ENCODE measurements at regions of chr2 and their contacts with region 1.

Region 1: DNA sequence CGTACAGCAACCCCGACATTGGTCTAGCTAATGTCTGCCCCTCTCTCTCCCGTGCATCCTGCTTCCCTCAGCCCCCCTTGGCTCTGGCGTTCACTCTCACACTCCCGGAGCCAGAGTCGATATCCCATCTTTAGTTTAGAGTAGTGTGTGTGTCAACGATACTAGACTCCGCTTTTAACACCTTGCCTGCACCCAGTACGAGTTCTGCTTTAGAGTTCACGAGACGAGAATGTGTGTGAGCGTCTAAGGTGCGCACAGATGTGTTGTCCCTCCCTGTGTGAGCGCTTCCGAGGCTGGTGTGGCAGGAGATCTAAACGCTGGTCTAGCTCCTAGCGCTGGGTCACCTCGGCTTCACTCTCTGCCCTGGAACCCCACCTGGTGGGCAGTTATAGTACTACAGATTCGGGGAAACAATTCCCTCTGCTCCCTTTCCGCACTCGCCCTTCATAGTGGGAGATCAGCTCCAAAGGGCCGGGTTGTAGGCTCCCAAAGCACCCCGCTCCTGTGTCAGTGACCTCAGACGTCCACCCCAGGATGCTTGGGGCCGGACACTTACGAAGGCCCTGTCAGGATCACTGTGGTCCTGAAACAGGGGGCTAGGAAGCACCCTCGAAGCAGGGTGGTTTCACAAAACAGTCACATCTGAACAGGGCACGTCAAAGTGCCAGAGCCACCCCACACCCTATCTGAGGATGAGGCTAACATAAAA is 2.6 kb upstream of the CYP26B1 start:
- DNase-seq: peak; percentile 86
- H3K4me3 ChIP-seq: peak overlapping the region; percentile 60
- H3K27ac ChIP-seq: no peak overlapping the region
- H3K4me1 ChIP-seq: peaks cover 23% of the 10 kb centered on the region
- H3K27me3 ChIP-seq: peaks cover 35% of the 10 kb centered on the region
- CTCF ChIP-seq: peak; percentile 78

Region 2: GRCh38 chr2:71545572-71546274 is 604.6 kb before region 1 on chr2:
- CTCF ChIA-PET with region 1: interaction called, 6 read pairs
- POLR2A ChIA-PET with region 1: no interaction called
- intact Hi-C with region 1: loop called (anchors 2 kb)
- DNase-seq: peak; percentile 80
- H3K4me3 ChIP-seq: peak overlapping the region; percentile 25
- H3K27ac ChIP-seq: no peak overlapping the region
- H3K4me1 ChIP-seq: peaks cover 4% of the 10 kb centered on the region
- H3K27me3 ChIP-seq: no peaks in the 10 kb centered on the region
- CTCF ChIP-seq: peak; percentile 84

Region 3: DNA sequence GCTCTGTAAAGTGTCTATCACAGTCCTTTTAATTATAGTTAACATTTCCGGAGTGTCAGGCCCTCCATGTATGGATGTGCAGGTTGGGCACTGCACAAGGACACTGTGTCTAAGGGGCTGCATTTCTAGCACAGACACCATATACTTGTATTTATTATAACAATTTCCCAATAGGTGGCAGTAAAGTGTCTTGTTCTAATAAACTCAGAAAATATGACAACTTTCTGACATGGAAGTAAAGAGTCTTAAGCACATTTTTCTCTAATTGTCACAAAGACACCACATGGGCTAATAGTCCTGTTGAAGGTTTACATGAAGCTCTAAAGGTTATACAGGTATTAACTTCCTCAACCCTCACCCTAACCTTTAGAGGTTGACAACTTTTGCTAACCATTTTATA is 540.4 kb before region 1 on chr2:
- CTCF ChIA-PET with region 1: interaction called, 3 read pairs
- POLR2A ChIA-PET with region 1: no interaction called
- intact Hi-C with region 1: loop called (anchors 10 kb)
- DNase-seq: peak; percentile 68
- H3K4me3 ChIP-seq: no peak overlapping the region
- H3K27ac ChIP-seq: no peak overlapping the region
- H3K4me1 ChIP-seq: peaks cover 5% of the 10 kb centered on the region
- H3K27me3 ChIP-seq: no peaks in the 10 kb centered on the region
- CTCF ChIP-seq: peak; percentile 45; the same call in 1 of the 2 replicates

Region 4: GRCh38 chr2:71798266-71799012 is 351.9 kb before region 1 on chr2:
- CTCF ChIA-PET with region 1: no interaction called
- POLR2A ChIA-PET with region 1: no interaction called
- intact Hi-C with region 1: loop called (anchors 5 kb)
- DNase-seq: peak; percentile 34
- H3K4me3 ChIP-seq: no peak overlapping the region
- H3K27ac ChIP-seq: no peak overlapping the region
- H3K4me1 ChIP-seq: no peaks in the 10 kb centered on the region
- H3K27me3 ChIP-seq: no peaks in the 10 kb centered on the region
- CTCF ChIP-seq: peak; percentile 87

Region 5: GRCh38 chr2:71923887-71924533 is 226.3 kb before region 1 on chr2:
- CTCF ChIA-PET with region 1: interaction called, 23 read pairs
- POLR2A ChIA-PET with region 1: no interaction called
- intact Hi-C with region 1: loop called (anchors 1 kb)
- DNase-seq: peak; percentile 82
- H3K4me3 ChIP-seq: no peak overlapping the region
- H3K27ac ChIP-seq: no peak overlapping the region
- H3K4me1 ChIP-seq: no peaks in the 10 kb centered on the region
- H3K27me3 ChIP-seq: no peaks in the 10 kb centered on the region
- CTCF ChIP-seq: peak; percentile 91

Region 6: GRCh38 chr2:72238311-72238710 is 88.0 kb after region 1 on chr2:
- CTCF ChIA-PET with region 1: no interaction called
- POLR2A ChIA-PET with region 1: no interaction called
- intact Hi-C with region 1: no loop called
- DNase-seq: no peak
- H3K4me3 ChIP-seq: no peak overlapping the region
- H3K27ac ChIP-seq: no peak overlapping the region
- H3K4me1 ChIP-seq: peaks cover 24% of the 10 kb centered on the region
- H3K27me3 ChIP-seq: no peaks in the 10 kb centered on the region
- CTCF ChIP-seq: no peak

Region 7: DNA sequence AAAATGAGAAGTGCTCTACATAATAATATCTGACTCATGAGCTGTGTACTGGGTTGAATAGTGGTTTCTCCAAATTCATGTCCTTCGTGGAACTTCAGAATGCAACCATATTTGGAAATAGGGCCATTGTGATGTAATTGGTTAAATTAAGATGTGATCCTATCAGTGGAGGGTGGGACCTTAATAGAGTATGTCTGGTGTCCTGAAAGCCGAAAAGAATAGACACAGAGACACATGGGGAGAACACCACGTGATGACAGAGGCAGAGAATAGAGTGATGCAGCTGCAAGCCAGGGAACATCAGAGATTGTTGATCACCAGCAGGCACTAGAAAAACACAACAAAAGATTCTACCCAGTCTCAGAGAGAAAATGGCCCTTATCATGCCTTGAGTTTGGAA is 365.4 kb after region 1 on chr2:
- CTCF ChIA-PET with region 1: no interaction called
- POLR2A ChIA-PET with region 1: no interaction called
- intact Hi-C with region 1: loop called (anchors 5 kb)
- DNase-seq: peak; percentile 97
- H3K4me3 ChIP-seq: peak overlapping the region; percentile 50
- H3K27ac ChIP-seq: peak overlapping the region; percentile 99
- H3K4me1 ChIP-seq: peaks cover 40% of the 10 kb centered on the region
- H3K27me3 ChIP-seq: no peaks in the 10 kb centered on the region
- CTCF ChIP-seq: no peak

Region 8: DNA sequence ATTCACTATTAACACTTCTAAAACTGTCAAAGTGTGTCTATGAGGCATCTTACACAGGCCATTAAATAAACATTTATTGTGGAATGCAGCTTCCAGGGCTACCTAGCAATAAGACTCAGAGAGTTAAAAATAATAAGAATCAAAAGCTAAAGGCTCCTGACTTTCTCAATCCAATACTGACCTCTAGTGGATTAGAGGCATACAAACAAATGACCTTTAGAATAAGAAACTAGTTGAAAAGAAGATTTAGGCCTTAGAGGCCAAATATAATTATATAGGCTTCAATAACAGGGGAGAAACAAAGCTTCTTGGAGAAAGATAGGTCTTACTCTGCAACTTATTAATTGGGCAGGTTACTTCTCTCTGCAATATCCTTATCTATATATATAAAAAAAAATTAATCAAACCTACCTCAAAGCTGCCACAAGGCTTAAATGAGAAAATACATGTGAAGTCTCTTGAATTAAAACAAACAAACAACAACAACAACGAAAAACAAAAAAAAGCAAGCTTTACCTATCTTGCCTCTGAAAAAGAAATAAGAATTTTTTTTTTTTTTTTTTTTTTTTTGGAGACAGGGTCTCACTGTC is 429.4 kb after region 1 on chr2:
- CTCF ChIA-PET with region 1: interaction called, 7 read pairs
- POLR2A ChIA-PET with region 1: no interaction called
- intact Hi-C with region 1: loop called (anchors 2 kb)
- DNase-seq: peak; percentile 81
- H3K4me3 ChIP-seq: no peak overlapping the region
- H3K27ac ChIP-seq: peak overlapping the region; percentile 10
- H3K4me1 ChIP-seq: peaks cover 48% of the 10 kb centered on the region
- H3K27me3 ChIP-seq: no peaks in the 10 kb centered on the region
- CTCF ChIP-seq: peak; percentile 73